ENCODE measurements at regions of chr7 and their contacts with region 1.

Region 1: DNA sequence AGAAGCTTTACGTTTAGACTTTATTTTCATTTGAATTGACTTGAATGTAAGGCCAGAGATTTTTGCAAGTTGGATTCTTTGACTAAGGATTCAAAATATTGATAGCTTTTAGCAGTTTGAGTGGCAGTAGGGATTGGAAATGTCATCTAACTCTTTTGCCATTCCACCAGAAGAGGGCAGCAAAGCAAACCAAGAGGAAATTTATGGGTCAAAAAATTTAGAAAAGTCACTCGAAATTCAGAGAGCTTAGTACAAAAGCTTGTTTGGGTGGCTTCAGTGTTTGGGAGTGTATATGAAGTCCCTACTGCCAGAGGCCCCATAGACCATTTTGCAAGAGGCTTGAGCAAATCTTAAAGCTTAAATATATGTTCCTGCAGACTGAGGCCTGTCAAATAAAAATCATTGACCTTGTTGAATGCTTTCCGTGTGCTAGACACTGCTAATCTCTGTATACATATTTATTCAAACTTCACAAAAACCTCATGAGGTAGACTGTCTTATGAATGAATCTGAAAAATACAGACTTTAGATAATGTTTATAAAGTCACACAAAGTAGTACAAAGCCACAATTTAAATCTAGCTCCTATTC is 44.6 kb upstream of the RSBN1L start:
- DNase-seq: no peak
- H3K4me3 ChIP-seq: no peak overlapping the region
- H3K27ac ChIP-seq: no peak overlapping the region
- H3K27me3 ChIP-seq: no peaks in the 10 kb centered on the region
- CTCF ChIP-seq: peak; percentile 77

Region 2: DNA sequence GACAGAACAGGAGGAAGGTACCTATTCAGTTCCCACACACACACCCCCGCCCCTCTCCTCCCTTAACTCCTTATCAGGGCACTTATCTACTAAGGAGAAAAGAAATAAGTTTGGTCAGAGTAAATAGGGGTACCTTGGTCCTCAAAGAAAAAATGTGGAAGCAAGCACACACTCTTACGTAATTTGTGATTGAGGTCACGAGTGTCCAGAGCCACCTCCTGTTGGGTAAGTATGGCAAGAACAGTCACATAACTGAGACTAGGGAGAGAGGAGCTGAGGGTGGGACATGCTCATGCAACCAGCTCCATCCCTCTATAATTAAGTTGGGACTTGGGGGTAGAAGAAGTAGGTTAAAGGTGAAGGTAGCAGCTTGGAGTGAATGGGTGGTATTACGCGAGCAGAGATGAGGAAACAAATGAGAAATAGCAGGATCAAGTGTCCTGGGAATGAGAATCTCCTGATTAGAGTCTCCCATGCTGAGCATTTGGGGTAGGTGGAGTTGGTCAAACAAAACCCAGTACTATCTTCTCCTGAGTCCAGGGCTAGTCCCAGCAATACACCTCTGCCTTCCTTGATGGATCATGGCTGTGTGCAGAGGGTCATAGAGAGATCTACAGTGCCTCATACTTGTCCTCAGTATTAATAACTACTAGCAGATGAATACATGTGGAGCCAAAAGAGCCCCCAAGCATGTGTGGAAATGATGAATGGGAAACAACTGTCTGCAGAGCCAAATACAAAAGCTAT is 312.6 kb before region 1 on chr7:
- CTCF ChIA-PET with region 1: no interaction called
- POLR2A ChIA-PET with region 1: no interaction called
- DNase-seq: no peak
- H3K4me3 ChIP-seq: no peak overlapping the region
- H3K27ac ChIP-seq: no peak overlapping the region
- H3K27me3 ChIP-seq: no peaks in the 10 kb centered on the region
- CTCF ChIP-seq: no peak

Region 3: DNA sequence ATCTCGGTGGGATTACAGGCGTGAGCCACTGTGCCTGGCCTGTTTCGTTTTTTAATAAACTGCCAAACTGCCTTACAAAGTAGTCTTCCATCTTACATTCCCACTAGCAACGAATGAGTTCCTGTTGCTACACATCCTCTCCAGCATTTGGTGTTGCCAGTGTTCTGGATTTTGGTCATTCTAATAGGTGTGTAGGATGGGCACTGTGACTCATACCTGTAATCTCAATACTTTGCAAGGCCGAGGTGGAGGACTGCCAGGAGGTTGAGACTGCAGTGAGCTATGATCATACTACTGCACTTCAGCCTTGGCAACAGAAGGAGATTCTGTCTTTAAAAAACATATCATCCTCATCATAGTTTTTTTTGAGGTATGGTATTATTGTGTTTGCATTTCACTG is 23.2 kb after region 1 on chr7:
- CTCF ChIA-PET with region 1: interaction called, 17 read pairs
- POLR2A ChIA-PET with region 1: no interaction called
- DNase-seq: no peak
- H3K4me3 ChIP-seq: no peak overlapping the region
- H3K27ac ChIP-seq: no peak overlapping the region
- H3K27me3 ChIP-seq: no peaks in the 10 kb centered on the region
- CTCF ChIP-seq: no peak

Region 4: DNA sequence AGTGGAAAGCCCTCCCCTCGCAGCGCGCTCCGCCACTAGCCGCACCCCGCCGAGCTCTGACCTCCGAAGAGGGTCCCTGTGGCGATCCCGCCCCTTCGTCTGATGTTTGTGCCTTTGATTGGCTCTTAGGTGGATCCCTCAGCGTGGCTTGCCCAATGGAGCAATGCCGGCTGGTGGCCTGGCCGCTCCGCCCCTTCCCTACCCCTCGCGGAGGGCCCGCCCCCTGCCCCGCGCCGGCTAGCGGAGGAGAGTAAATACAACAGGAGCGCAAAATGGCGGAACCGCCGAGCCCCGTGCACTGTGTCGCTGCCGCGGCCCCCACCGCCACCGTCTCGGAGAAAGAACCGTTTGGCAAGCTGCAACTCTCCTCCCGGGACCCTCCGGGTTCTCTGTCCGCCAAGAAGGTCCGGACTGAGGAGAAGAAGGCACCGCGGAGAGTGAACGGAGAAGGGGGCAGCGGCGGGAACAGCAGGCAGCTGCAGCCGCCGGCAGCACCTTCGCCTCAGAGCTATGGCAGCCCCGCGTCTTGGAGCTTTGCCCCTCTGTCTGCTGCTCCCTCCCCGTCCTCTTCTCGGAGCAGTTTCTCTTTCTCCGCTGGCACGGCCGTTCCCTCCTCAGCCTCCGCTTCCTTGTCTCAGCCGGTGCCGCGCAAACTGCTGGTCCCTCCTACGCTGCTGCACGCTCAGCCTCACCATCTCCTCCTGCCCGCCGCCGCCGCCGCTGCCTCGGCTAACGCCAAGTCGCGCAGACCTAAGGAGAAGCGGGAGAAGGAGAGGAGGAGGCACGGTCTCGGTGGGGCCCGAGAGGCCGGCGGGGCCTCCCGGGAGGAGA is 44.7 kb after region 1 on chr7 and contains the start of gene RSBN1L:
- CTCF ChIA-PET with region 1: interaction called, 20 read pairs
- POLR2A ChIA-PET with region 1: no interaction called
- DNase-seq: peak; percentile 92
- H3K4me3 ChIP-seq: peak within 1 kb of the TSS; percentile 94
- H3K27ac ChIP-seq: peak within 1 kb of the TSS; percentile 78
- H3K27me3 ChIP-seq: no peaks in the 10 kb centered on the region
- CTCF ChIP-seq: peak; percentile 42
- polyA plus RNA-seq, gene RSBN1L: 9.3 and 14.0 TPM in 2 replicates

Region 5: DNA sequence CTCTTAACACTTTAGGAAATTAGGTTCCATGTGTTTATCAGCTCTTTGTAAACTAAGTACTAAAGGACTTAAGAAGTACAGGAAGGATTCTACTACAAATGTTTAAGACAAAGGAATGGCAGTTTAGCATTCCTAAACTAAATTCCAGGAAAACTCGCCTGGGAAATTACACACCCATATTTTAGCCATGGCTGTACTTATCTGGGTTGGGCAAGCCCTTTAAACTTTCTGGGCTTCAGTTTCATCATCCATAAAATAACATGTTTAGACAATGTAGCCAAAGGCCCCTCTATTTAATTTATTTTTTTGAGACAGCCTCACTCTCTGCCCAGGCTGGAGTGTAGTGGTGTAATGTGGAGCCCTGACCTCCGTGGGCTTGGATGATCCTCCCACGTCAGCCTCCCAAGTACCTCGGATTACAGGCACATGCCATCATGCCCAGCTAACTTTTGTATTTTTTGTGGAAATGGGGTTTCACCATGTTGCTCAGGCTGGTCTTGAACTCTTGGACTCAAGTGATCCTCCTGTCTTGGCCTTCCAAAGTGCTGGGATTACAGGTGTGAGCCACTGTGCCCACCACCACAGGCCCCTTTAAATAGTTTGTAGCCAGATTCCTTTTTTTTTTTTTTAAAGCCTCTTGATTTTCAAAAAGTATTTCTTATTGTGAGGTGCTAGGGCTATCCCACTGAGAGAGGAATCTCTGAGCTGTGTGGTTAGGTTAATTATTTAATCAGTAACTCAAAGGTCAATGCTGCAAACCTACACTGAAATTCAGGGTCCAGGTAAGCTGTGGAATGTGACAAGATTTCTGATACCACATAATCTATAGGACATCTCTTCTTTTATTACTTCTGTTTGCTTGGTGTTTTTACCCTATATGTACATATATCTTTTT is 114.5 kb after region 1 on chr7:
- CTCF ChIA-PET with region 1: interaction called, 116 read pairs
- POLR2A ChIA-PET with region 1: no interaction called
- DNase-seq: peak; percentile 15
- H3K4me3 ChIP-seq: no peak overlapping the region
- H3K27ac ChIP-seq: peak overlapping the region; percentile 71
- H3K27me3 ChIP-seq: no peaks in the 10 kb centered on the region
- CTCF ChIP-seq: no peak

Region 6: DNA sequence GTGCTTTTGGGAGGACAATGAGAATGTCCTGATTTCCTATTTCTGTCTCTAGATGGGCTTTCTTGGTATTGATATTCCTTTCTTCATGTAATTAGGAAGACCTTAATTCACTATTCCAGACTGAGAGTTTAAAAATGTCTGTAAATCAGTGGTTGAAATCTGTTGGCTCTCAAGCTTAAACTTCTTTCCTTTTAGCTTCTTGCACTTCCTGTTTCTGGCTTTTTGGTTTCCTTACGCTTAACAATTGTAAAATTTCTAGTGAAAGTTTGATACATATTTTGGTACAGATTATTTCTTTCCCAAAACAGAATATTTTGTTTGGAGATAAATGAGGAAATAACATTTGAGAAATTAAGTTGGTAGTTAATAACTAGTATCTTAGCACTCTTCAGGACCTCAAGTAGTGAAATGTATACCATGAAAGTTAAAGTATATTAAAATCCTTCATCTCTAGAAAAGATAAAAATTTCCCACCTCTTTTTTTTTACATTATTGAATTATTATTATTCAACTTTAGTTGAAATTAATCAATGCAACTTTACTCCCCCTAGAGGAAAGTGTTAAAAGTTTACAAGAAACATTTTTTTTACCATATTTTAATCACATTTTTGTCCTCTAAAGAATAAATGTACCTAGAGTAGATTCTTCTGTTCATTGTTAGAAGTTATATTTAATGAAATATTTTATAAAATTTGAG is 284.1 kb after region 1 on chr7:
- CTCF ChIA-PET with region 1: interaction called, 17 read pairs
- POLR2A ChIA-PET with region 1: no interaction called
- DNase-seq: no peak
- H3K4me3 ChIP-seq: no peak overlapping the region
- H3K27ac ChIP-seq: no peak overlapping the region
- H3K27me3 ChIP-seq: no peaks in the 10 kb centered on the region
- CTCF ChIP-seq: peak; percentile 31; the same call in 1 of the 2 replicates

Measured in AG04450 (cell line).